PC-9 (cell line): ENCODE measurements at regions of chr10 and their contacts with region 1.

Region 1: DNA sequence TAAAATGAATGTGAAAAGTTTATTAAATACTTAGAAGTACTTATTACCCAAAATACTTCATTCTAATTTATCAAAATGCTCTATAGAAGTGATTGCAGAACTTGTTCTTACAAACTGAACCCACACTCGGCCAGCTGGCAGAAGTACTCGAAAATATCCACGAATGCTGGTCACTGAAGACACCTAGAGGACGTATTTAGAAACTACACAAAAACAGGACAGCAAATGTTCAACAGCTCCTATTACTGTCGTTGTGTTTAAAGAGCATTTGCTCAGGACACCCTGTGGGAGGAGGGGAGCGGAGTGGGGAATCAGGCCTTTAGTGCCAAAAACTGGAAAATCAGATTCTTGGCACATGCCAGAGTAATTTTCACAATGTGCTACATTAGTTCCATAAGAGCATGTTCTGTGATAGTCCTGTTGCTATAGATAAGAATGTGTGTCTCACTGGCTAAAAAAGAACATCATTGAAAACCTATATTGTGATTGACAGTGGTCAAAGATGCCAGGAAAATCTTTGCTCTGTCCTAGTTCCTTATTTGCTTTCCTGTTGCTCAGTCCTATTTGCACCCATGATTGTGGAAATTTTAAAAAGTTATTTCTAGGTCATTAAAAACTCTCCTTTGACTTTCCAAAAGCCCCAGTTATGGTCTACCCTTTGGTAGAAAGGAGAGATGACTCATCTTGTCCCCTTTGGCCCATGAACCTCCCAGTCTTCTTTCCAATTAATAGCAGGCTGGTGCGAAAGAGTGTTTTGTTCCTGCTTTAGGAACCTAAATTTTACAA is 49.0 kb upstream of the NRBF2 start:
- DNase-seq: peak; percentile 24 to 53
- H3K4me3 ChIP-seq: no peak overlapping the region
- H3K27ac ChIP-seq: no peak overlapping the region
- H3K4me1 ChIP-seq: no peaks in the 10 kb centered on the region
- H3K27me3 ChIP-seq: no peaks in the 10 kb centered on the region
- CTCF ChIP-seq: peak; percentile 84

Region 2: GRCh38 chr10:61248013-61248412 is 1836.1 kb before region 1 on chr10:
- CTCF ChIA-PET with region 1: no interaction called
- POLR2A ChIA-PET with region 1: no interaction called
- intact Hi-C with region 1: loop called (anchors 5 kb)
- DNase-seq: no peak
- H3K4me3 ChIP-seq: no peak overlapping the region
- H3K27ac ChIP-seq: no peak overlapping the region
- H3K4me1 ChIP-seq: no peaks in the 10 kb centered on the region
- H3K27me3 ChIP-seq: no peaks in the 10 kb centered on the region
- CTCF ChIP-seq: no peak

Region 3: DNA sequence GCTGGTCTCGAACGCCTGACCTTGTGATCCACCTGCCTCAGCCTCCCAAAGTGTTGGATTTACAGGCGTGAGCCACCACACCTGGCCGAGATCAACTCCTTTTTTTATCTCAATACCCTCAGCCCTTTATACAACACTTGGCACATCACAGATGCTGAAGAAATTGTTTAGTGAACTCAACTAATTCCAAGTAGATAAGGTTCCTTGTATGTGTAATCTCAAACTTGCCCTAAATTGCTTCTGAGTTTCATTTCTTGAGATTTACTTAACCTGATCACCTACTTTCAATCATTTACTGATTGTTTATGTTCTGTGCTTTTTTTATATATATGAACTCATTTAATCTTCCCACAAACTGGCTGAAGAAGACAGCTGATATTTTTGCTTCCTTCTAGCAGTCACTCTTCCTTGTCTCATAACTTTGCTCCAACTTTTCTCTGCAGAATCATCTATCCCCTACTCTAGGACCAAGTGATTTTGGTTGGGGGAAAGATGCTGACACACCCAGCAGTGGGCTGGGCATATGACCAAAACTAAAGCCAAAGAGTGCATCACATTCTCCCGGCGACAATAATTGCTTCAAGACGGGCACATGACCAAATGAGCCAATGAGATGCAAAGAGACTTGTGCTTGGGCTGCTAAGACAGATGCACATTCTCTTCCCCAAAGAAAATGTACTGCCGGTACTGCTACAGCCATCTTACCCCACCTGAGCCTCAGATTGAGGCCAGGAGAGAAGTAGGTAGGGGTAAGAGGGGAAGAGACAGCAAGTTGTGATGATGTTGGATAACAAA is 1222.9 kb before region 1 on chr10:
- CTCF ChIA-PET with region 1: no interaction called
- POLR2A ChIA-PET with region 1: interaction called, 13 read pairs
- intact Hi-C with region 1: no loop called
- DNase-seq: no peak
- H3K4me3 ChIP-seq: no peak overlapping the region
- H3K27ac ChIP-seq: no peak overlapping the region
- H3K4me1 ChIP-seq: no peaks in the 10 kb centered on the region
- H3K27me3 ChIP-seq: no peaks in the 10 kb centered on the region
- CTCF ChIP-seq: no peak

Region 4: GRCh38 chr10:62492012-62492869 is 591.9 kb before region 1 on chr10:
- CTCF ChIA-PET with region 1: no interaction called
- POLR2A ChIA-PET with region 1: no interaction called
- intact Hi-C with region 1: loop called (anchors 5 kb)
- DNase-seq: peak in 1 of 2 experiments; percentile 42
- H3K4me3 ChIP-seq: no peak overlapping the region
- H3K27ac ChIP-seq: no peak overlapping the region
- H3K4me1 ChIP-seq: no peaks in the 10 kb centered on the region; the same call in 1 of the 2 replicates
- H3K27me3 ChIP-seq: no peaks in the 10 kb centered on the region
- CTCF ChIP-seq: peak; percentile 70

Region 5: DNA sequence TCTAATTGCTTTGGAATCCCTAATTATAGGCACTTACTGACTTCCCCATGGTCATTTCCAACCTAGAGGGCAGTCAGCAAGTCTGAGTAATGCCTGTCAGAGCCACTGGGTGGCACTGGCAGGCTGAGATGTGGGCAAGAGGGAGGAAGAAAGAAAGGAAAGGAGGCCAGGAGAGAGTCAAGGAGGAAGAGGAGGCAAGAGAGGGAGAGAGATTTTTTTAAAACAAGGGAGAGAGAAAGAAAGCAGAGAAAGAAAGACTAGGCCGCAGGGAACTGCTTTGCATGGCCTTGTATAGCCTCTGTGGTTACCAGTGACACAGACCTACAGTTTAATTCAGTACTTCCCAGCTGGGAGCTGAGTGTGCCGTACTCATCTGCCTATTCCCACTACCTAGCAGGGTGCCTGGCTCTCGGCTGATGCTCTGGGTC is 490.0 kb before region 1 on chr10:
- CTCF ChIA-PET with region 1: no interaction called
- POLR2A ChIA-PET with region 1: no interaction called
- intact Hi-C with region 1: loop called (anchors 5 kb)
- DNase-seq: peak in 1 of 2 experiments; percentile 45
- H3K4me3 ChIP-seq: no peak overlapping the region
- H3K27ac ChIP-seq: no peak overlapping the region
- H3K4me1 ChIP-seq: no peaks in the 10 kb centered on the region
- H3K27me3 ChIP-seq: no peaks in the 10 kb centered on the region
- CTCF ChIP-seq: peak; percentile 97

Region 6: GRCh38 chr10:63064706-63065105 is 19.4 kb before region 1 on chr10:
- CTCF ChIA-PET with region 1: no interaction called
- POLR2A ChIA-PET with region 1: no interaction called
- intact Hi-C with region 1: no loop called
- DNase-seq: no peak
- H3K4me3 ChIP-seq: no peak overlapping the region
- H3K27ac ChIP-seq: no peak overlapping the region
- H3K4me1 ChIP-seq: 0 out of 2 replicates have a peak, but pooled peaks cover 6% of the 10 kb centered on the region
- H3K27me3 ChIP-seq: no peaks in the 10 kb centered on the region
- CTCF ChIP-seq: no peak